SK-N-SH (cell line): ENCODE measurements at regions of chr10 and their contacts with region 1.

Region 1: DNA sequence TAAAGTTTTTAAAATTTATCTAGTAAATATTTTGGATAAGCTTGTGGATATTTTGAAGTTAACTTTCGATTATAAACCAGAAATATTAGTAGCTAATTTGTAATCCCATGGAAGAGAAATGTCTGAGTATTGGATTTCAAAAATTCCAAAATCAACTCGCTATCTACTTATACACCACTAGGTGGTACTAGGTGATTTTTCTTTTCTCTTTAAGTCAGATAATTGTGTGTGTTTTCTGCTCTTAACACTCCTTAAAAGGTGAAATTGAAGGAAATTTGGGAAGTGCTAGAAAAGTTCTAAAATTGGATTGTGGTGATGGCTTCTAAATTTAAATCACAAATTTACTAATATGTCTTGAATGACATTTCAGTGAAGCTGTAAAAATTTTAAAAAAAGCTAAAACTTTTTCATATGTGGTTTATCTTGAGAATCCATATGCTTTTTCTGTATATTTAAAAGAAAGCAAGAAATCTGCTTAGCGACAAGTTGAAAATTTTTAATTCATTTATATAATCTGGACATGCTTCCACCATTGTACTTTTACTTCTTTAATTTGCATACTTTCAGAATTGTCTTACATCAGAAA is 90.2 kb downstream of the IPMK start:
- DNase-seq: peak; percentile 23
- H3K4me3 ChIP-seq: no peak overlapping the region; a peak in 1 of 4 replicates
- H3K27ac ChIP-seq: no peak overlapping the region
- H3K4me1 ChIP-seq: no peaks in the 10 kb centered on the region; a peak in 1 of 4 replicates
- H3K27me3 ChIP-seq: no peaks in the 10 kb centered on the region
- CTCF ChIP-seq: peak; percentile 79
- EP300 ChIP-seq: no peak
- RAD21 ChIP-seq: peak; percentile 84

Region 2: GRCh38 chr10:58041901-58042300 is 135.6 kb before region 1 on chr10:
- CTCF ChIA-PET with region 1: no interaction called
- POLR2A ChIA-PET with region 1: no interaction called
- DNase-seq: no peak
- H3K4me3 ChIP-seq: no peak overlapping the region
- H3K27ac ChIP-seq: no peak overlapping the region
- H3K4me1 ChIP-seq: no peaks in the 10 kb centered on the region
- H3K27me3 ChIP-seq: no peaks in the 10 kb centered on the region
- CTCF ChIP-seq: no peak
- EP300 ChIP-seq: no peak
- RAD21 ChIP-seq: no peak

Region 3: GRCh38 chr10:58152673-58153263 is 24.7 kb before region 1 on chr10:
- CTCF ChIA-PET with region 1: interaction called, 18 read pairs
- POLR2A ChIA-PET with region 1: no interaction called
- DNase-seq: peak; percentile 41
- H3K4me3 ChIP-seq: no peak overlapping the region
- H3K27ac ChIP-seq: no peak overlapping the region
- H3K4me1 ChIP-seq: peaks cover 0 to 4% of the 10 kb centered on the region in 2 experiments; a peak in 1 of 4 replicates
- H3K27me3 ChIP-seq: no peaks in the 10 kb centered on the region
- CTCF ChIP-seq: peak; percentile 70
- EP300 ChIP-seq: no peak
- RAD21 ChIP-seq: peak; percentile 82

Region 4: GRCh38 chr10:58201704-58202103 is 24.2 kb after region 1 on chr10:
- CTCF ChIA-PET with region 1: interaction called, 13 read pairs
- POLR2A ChIA-PET with region 1: no interaction called
- DNase-seq: no peak
- H3K4me3 ChIP-seq: no peak overlapping the region
- H3K27ac ChIP-seq: no peak overlapping the region
- H3K4me1 ChIP-seq: no peaks in the 10 kb centered on the region; a peak in 1 of 4 replicates
- H3K27me3 ChIP-seq: no peaks in the 10 kb centered on the region
- CTCF ChIP-seq: no peak
- EP300 ChIP-seq: no peak
- RAD21 ChIP-seq: no peak

Region 5: GRCh38 chr10:58275908-58276307 is 98.5 kb after region 1 on chr10:
- CTCF ChIA-PET with region 1: interaction called, 16 read pairs
- POLR2A ChIA-PET with region 1: interaction called, 4 read pairs
- DNase-seq: no peak
- H3K4me3 ChIP-seq: no peak overlapping the region
- H3K27ac ChIP-seq: peak overlapping the region; percentile 16 to 70; a peak in 3 of 4 replicates
- H3K4me1 ChIP-seq: peaks cover 2 to 26% of the 10 kb centered on the region in 2 experiments; a peak in 3 of 4 replicates
- H3K27me3 ChIP-seq: no peaks in the 10 kb centered on the region
- CTCF ChIP-seq: no peak
- EP300 ChIP-seq: no peak
- RAD21 ChIP-seq: no peak

Region 6: GRCh38 chr10:58291538-58292174 is 114.2 kb after region 1 on chr10:
- CTCF ChIA-PET with region 1: interaction called, 200 read pairs
- POLR2A ChIA-PET with region 1: no interaction called
- DNase-seq: peak; percentile 56
- H3K4me3 ChIP-seq: no peak overlapping the region; a peak in 1 of 4 replicates
- H3K27ac ChIP-seq: peak overlapping the region in 1 of 2 experiments; percentile 47; a peak in 2 of 4 replicates
- H3K4me1 ChIP-seq: peaks cover 0 to 6% of the 10 kb centered on the region in 2 experiments; a peak in 1 of 4 replicates
- H3K27me3 ChIP-seq: no peaks in the 10 kb centered on the region
- CTCF ChIP-seq: peak; percentile 87
- EP300 ChIP-seq: no peak
- RAD21 ChIP-seq: peak; percentile 95